AG04450 (cell line): ENCODE measurements at regions of chr17 and their contacts with region 1.

Region 1: DNA sequence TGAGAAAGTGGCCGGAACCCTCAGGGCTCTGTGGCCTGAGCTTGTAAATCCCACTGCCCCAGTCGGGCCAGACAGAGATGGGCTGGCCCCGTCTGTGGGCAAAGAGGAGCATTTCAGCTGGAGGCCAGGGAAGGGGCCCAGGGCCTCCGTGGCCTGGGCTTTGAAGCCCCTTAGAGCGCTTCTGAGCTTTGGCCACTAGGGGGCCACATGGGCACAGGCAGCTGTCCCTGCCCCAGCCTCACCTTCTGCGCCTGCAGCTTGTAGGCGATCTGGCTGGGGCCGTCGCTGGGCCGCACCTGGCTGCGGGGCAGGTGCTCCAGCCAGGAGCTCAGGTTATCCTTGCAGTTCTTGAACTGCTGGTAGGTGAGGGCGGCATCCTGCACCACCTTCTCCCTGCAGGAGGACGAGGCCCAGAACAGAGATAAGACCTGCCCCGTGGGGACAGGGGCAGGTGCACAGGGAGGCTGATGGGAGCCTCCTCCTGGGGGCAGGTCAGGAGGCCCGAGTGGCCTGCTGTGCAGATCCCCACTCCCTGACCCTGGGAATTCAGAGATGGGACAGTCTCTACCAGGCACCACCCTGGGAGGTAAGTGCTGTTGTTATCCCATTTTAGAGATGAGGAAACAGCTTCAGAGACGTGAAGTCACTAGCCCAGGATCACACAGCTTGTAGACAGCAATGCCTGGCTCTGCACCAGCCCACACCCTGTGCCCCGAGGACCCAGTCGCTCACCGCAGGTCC is 12.8 kb downstream of the EVPL start:
- DNase-seq: no peak
- H3K4me3 ChIP-seq: no peak overlapping the region
- H3K27ac ChIP-seq: no peak overlapping the region
- H3K27me3 ChIP-seq: peaks cover 11% of the 10 kb centered on the region
- CTCF ChIP-seq: peak; percentile 95

Region 2: DNA sequence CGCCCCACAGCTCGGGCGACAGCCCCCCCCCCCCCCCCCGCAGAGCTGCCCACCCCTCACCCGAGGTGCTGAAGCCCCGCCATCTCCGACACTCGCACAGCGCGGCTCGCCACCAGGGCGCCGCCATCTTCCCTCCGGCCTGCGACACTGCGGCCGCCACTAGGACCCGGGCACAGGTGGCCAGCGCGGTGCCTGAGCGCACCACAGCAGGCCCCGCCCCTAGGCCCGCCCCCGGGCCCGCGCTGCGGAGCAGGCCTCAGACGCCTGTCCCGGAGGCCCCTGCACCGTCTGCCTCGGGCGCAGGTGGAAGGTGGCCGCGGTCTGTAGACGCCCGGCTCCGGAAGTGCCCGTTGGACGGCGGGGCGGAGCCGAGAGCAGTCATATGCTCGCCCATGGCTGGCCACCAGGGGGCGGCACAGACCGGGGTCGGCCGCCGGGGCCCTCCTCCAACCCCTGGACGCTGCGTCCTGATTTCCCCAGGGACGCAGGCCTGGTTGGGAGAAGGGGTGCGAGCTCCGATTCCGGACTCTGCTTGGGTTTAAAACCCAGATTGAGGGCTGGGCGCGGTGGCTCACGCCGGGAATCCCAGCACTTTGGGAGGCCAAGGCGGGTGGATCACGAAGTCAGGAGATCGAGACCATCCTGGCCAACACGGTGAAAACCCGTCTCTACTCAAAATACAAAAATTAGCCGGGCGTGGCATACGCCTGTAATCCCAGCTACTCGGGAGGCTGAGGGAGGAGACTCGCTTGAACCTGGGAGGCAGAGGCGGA is 109.4 kb before region 1 on chr17 and contains the start of gene MRPL38:
- CTCF ChIA-PET with region 1: interaction called, 10 read pairs
- POLR2A ChIA-PET with region 1: no interaction called
- DNase-seq: peak; percentile 80
- H3K4me3 ChIP-seq: peak within 1 kb of the TSS; percentile 75
- H3K27ac ChIP-seq: peak within 1 kb of the TSS; percentile 61
- H3K27me3 ChIP-seq: no peaks in the 10 kb centered on the region
- CTCF ChIP-seq: peak; percentile 83
- polyA plus RNA-seq, gene MRPL38: 16.6 and 21.9 TPM in 2 replicates

Region 3: DNA sequence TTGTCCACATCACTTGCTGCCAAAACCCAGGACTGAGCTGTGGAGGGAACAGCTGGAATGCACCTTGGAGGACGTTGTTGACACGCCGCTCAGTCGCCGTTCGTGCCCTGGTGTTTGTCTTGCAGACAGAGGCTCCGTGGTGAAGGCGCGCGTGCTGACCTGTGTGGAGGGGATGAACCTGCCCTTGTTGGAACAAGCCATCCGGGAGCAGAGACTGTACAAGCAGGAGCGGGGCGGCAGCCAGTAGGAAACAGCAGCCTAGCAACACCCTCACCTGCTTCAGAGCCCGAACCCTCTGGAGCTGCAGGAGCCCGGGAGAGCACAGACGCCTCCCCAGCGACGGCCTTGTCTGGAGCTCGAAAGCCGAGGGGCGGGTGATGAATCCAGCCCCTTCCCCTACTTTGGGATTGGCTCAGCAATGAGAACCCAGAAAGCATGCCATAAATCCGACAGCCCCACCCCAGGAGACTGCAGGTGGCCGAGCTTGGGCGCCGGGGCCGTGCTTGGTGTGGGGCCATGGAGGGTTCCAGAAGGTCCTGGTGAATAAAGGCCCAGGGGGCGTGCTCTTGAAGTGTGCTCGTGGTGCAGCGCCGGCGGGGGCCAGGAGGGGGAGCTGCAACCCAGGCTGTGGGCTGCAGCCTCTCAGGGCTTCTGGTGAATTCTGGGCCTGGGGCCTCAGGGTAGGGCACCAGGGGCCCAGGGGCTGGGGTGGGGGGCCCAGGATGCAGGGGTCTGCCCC is 14.2 kb before region 1 on chr17:
- CTCF ChIA-PET with region 1: interaction called, 57 read pairs
- POLR2A ChIA-PET with region 1: no interaction called
- DNase-seq: no peak
- H3K4me3 ChIP-seq: no peak overlapping the region
- H3K27ac ChIP-seq: no peak overlapping the region
- H3K27me3 ChIP-seq: no peaks in the 10 kb centered on the region
- CTCF ChIP-seq: peak; percentile 66

Region 4: GRCh38 chr17:76027159-76027839 is 12.9 kb after region 1 on chr17 and contains the start of gene EVPL:
- CTCF ChIA-PET with region 1: interaction called, 14 read pairs
- POLR2A ChIA-PET with region 1: interaction called, 5 read pairs
- DNase-seq: no peak
- H3K4me3 ChIP-seq: no peak within 1 kb of the TSS
- H3K27ac ChIP-seq: no peak within 1 kb of the TSS
- H3K27me3 ChIP-seq: peaks cover 3% of the 10 kb centered on the region
- CTCF ChIP-seq: no peak
- polyA plus RNA-seq, gene EVPL: not detected in 2 replicates

Region 5: DNA sequence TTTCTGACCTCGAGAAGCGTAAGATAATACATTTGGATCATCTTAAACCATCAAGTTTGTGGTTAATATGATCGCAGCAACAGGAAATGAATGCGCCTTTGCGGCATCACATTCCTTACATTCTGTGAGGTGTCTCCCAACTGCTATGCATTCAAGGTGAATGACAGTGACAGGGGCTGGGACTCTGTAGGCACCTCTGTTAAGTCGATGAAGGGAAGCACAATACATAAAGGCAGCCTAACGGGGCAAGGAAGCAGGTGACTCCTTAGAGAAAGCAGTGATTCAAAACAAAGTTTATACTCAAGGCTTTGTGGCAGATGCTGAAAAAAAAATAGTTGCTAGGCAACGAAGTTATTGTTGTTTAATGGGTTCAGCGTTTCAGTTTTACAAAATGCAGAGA is 34.4 kb after region 1 on chr17:
- CTCF ChIA-PET with region 1: interaction called, 11 read pairs
- POLR2A ChIA-PET with region 1: interaction called, 3 read pairs
- DNase-seq: no peak
- H3K4me3 ChIP-seq: no peak overlapping the region
- H3K27ac ChIP-seq: no peak overlapping the region
- H3K27me3 ChIP-seq: no peaks in the 10 kb centered on the region
- CTCF ChIP-seq: no peak

Region 6: GRCh38 chr17:76182016-76182764 is 167.8 kb after region 1 on chr17:
- CTCF ChIA-PET with region 1: interaction called, 12 read pairs
- POLR2A ChIA-PET with region 1: no interaction called
- DNase-seq: peak; percentile 62
- H3K4me3 ChIP-seq: no peak overlapping the region
- H3K27ac ChIP-seq: no peak overlapping the region
- H3K27me3 ChIP-seq: no peaks in the 10 kb centered on the region
- CTCF ChIP-seq: peak; percentile 91